HEK293 (cell line): ENCODE measurements at regions of chr19 and their contacts with region 1.

Region 1: GRCh38 chr19:46076951-46077816 is 36.4 kb upstream of the IGFL4 start:
- H3K4me3 ChIP-seq: peak overlapping the region; percentile 47
- H3K27ac ChIP-seq: no peak overlapping the region; the same call in 1 of the 2 replicates
- H3K4me1 ChIP-seq: peaks cover 5% of the 10 kb centered on the region
- CTCF ChIP-seq: peak; percentile 99

Region 2: GRCh38 chr19:45973578-45974338 is 103.4 kb before region 1 on chr19 and contains the start of gene NOVA2:
- CTCF ChIA-PET with region 1: no interaction called
- POLR2A ChIA-PET with region 1: no interaction called
- H3K4me3 ChIP-seq: peak within 1 kb of the TSS; percentile 49
- H3K27ac ChIP-seq: no peak within 1 kb of the TSS
- H3K4me1 ChIP-seq: no peaks in the 10 kb centered on the region
- CTCF ChIP-seq: no peak

Region 3: GRCh38 chr19:46009530-46010510 is 67.4 kb before region 1 on chr19:
- CTCF ChIA-PET with region 1: interaction called, 39 read pairs
- POLR2A ChIA-PET with region 1: no interaction called
- H3K4me3 ChIP-seq: no peak overlapping the region
- H3K27ac ChIP-seq: no peak overlapping the region
- H3K4me1 ChIP-seq: no peaks in the 10 kb centered on the region
- CTCF ChIP-seq: peak; percentile 87

Region 4: DNA sequence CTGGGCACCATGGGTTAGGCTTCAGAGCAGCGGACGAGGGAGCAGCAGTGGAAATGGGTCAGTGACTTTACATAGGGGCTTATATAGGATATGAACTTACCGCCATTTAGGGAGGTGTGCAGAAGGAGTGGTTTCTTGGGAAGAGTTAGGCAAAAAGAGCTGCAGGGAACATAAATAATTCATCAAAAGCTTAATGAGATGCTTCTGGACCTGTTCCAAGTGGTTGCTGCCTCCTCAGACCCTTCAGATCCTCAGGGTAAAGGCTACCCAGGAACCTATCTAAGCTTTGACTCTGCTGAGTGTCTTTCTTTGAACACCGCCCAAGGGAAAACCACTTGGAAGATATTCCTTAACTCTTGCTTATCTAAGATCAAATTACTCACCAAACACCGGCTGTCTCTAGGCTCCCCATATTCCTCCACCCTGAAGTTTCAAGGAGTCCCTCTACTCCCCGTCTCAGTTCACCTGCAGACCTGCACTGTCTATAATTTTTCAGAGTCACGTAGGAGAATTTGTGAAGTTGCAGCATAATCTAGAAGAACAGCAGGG is 36.2 kb before region 1 on chr19 and contains the start of gene IGFL4:
- CTCF ChIA-PET with region 1: interaction called, 625 read pairs
- POLR2A ChIA-PET with region 1: interaction called, 12 read pairs
- H3K4me3 ChIP-seq: no peak within 1 kb of the TSS
- H3K27ac ChIP-seq: peak within 1 kb of the TSS; percentile 53; the same call in 1 of the 2 replicates
- H3K4me1 ChIP-seq: peaks cover 16% of the 10 kb centered on the region
- CTCF ChIP-seq: no peak

Region 5: GRCh38 chr19:46111376-46111775 is 34.2 kb after region 1 on chr19:
- CTCF ChIA-PET with region 1: interaction called, 13 read pairs
- POLR2A ChIA-PET with region 1: no interaction called
- H3K4me3 ChIP-seq: no peak overlapping the region
- H3K27ac ChIP-seq: no peak overlapping the region
- H3K4me1 ChIP-seq: peaks cover 10% of the 10 kb centered on the region
- CTCF ChIP-seq: no peak

Region 6: DNA sequence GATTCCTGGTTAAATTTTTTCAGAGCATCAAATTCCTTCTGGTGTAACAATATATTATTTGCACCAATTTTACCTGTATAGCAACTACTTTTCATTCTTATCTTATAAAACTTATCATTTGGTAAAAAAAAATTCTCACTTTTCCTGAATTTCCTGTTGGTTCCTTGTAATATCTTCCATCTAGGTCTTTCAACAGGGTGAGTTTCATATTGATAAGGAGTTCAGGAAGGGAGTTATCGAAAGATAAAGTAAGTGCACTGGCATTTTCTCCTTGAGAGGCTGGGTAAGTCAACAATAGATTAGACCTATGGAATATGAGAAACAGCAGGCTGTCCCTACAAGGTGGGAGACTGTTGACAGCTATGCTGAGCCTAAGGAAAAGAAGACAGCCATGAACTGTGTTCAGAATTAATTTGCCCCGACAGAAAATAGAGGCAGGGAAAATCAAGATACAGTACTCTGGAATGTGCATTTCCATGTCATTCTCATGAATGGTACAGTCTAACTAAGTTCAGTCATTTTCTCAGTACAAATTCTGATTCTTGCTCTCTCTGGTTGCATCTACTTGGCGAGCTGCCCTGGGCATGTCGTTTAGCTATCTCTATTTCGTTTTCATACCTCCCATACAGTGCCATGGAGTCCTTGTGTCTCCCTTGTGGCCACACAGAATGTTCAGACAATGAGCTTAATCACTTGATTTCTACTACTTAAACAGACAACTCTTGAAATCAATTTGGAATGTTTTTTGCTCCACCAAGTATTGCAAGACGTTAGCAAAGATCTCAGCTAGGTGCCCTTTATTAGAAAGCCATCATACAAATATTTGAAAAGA is 162.2 kb after region 1 on chr19:
- CTCF ChIA-PET with region 1: interaction called, 10 read pairs
- POLR2A ChIA-PET with region 1: no interaction called
- H3K4me3 ChIP-seq: no peak overlapping the region
- H3K27ac ChIP-seq: no peak overlapping the region
- H3K4me1 ChIP-seq: no peaks in the 10 kb centered on the region
- CTCF ChIP-seq: no peak

Region 7: DNA sequence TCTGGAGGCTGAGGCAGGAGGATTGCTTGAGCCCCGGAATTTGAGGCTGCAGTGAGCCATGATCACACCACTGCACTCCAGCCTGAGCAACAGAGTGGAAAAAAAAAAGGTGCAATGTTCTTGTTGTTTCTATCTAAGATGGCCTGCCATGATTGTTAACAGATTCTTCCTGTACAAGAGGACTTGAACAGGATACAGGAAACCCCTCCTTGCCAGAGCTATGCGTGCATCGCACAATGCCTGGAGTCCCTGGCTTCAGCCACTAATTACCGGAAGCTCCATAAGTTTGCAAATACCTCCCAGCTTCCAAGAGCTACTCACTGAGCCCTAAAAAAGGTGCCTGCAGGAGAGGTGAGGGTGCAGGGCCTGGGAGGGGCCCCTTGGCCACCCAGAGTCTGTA is 206.6 kb after region 1 on chr19:
- CTCF ChIA-PET with region 1: interaction called, 28 read pairs
- POLR2A ChIA-PET with region 1: no interaction called
- H3K4me3 ChIP-seq: no peak overlapping the region
- H3K27ac ChIP-seq: no peak overlapping the region
- H3K4me1 ChIP-seq: no peaks in the 10 kb centered on the region
- CTCF ChIP-seq: no peak